Activated CD4-positive, alpha-beta memory T cell treated with anti-CD3 and anti-CD28 coated beads for 36 hours (primary cell): ENCODE measurements at regions of chr13 and their contacts with region 1.

Region 1: GRCh38 chr13:44259045-44260027 is 114.3 kb upstream of the SERP2 start:
- DNase-seq: peak; percentile 88
- H3K4me3 Mint-ChIP-seq: peak overlapping the region; percentile 45
- H3K27ac Mint-ChIP-seq: peak overlapping the region; percentile 72
- H3K4me1 Mint-ChIP-seq: peaks cover 20% of the 10 kb centered on the region
- H3K27me3 Mint-ChIP-seq: peaks cover 9% of the 10 kb centered on the region

Region 2: DNA sequence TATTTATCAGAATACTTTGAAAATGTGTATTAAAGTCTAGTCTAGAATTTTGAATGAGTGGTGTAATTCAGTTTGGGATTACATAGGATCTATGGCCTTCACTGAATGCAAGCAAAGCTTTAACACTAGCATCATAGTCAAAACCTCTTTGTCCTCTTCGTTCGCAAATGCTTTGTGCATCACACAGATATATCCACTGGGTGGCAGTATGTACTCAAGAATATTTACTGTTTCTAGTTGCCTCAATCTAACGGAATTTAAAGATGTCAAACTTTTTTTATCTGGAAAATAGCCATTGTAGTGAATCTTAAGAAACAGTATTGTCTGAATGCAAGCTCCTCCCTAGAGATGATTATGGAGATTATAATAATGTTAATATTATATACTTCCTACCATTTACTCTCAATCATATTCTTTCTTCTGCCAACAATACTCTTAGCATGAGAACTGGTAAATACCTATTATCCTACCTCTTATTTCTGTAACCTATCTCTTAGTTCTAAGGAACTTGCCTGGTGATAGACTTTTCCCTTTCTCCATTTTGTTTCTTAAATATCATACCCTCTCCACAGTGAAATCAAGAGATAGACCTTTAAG is 353.8 kb before region 1 on chr13:
- CTCF ChIA-PET with region 1: no interaction called
- POLR2A ChIA-PET with region 1: no interaction called
- intact Hi-C with region 1: loop called (anchors 10 kb)
- DNase-seq: peak; percentile 9
- H3K4me3 Mint-ChIP-seq: no peak overlapping the region
- H3K27ac Mint-ChIP-seq: no peak overlapping the region
- H3K4me1 Mint-ChIP-seq: peaks cover 3% of the 10 kb centered on the region
- H3K27me3 Mint-ChIP-seq: peaks cover 9% of the 10 kb centered on the region

Region 3: GRCh38 chr13:43977911-43978310 is 281.4 kb before region 1 on chr13:
- CTCF ChIA-PET with region 1: no interaction called
- POLR2A ChIA-PET with region 1: no interaction called
- intact Hi-C with region 1: no loop called
- DNase-seq: no peak
- H3K4me3 Mint-ChIP-seq: no peak overlapping the region
- H3K27ac Mint-ChIP-seq: no peak overlapping the region
- H3K4me1 Mint-ChIP-seq: no peaks in the 10 kb centered on the region
- H3K27me3 Mint-ChIP-seq: peaks cover 15% of the 10 kb centered on the region

Region 4: GRCh38 chr13:44181731-44182326 is 77.5 kb before region 1 on chr13:
- CTCF ChIA-PET with region 1: no interaction called
- POLR2A ChIA-PET with region 1: no interaction called
- intact Hi-C with region 1: no loop called
- DNase-seq: no peak
- H3K4me3 Mint-ChIP-seq: no peak overlapping the region
- H3K27ac Mint-ChIP-seq: no peak overlapping the region
- H3K4me1 Mint-ChIP-seq: no peaks in the 10 kb centered on the region
- H3K27me3 Mint-ChIP-seq: peaks cover 6% of the 10 kb centered on the region

Region 5: DNA sequence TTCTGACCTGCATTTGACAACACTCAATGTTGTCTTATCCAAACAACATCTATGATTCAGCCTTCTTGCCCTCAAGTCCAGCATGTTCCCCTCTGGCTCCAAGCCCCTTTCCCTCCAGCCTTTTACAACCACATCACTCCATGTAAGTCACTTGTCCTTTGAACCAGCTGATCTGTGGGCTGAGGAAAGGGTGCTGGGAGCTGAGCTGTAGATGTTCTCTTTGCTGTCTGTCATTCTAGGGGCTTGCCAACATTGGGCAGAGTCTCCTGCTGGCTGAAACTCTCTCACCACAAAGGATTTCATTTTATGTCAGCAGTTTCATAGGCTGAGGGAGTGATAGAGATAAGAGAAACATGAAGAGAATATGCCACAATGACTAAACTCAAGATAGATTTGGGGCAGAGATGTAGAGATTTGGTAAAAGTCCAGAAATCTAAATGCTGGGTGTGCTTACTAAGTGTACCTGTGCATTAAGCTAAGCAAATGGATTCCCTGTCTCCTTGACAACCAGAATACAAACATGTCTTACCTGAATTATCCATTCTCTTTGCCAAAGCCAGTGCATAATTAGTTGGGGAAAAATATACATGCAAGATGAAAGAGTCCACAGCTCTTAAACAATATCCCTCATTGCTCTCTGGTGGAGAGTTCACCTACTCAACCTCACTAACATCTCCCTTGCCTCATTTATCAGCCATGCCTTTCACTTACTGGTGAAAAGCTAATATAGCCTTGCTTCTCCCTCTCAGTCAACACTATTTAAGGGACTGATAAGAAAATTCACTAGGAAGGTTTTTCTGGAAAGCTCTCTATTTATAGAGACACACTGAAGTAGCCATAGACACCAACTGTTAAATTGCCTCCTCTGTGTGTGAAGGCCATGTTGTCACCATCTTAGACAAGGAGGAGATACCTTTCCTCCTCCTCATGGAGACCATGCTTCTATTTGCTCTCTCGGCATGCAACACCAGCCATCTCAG is 61.3 kb before region 1 on chr13:
- CTCF ChIA-PET with region 1: no interaction called
- POLR2A ChIA-PET with region 1: interaction called, 3 read pairs
- intact Hi-C with region 1: loop called (anchors 1 kb)
- DNase-seq: peak; percentile 60
- H3K4me3 Mint-ChIP-seq: no peak overlapping the region
- H3K27ac Mint-ChIP-seq: no peak overlapping the region
- H3K4me1 Mint-ChIP-seq: peaks cover 34% of the 10 kb centered on the region
- H3K27me3 Mint-ChIP-seq: peaks cover 16% of the 10 kb centered on the region

Region 6: DNA sequence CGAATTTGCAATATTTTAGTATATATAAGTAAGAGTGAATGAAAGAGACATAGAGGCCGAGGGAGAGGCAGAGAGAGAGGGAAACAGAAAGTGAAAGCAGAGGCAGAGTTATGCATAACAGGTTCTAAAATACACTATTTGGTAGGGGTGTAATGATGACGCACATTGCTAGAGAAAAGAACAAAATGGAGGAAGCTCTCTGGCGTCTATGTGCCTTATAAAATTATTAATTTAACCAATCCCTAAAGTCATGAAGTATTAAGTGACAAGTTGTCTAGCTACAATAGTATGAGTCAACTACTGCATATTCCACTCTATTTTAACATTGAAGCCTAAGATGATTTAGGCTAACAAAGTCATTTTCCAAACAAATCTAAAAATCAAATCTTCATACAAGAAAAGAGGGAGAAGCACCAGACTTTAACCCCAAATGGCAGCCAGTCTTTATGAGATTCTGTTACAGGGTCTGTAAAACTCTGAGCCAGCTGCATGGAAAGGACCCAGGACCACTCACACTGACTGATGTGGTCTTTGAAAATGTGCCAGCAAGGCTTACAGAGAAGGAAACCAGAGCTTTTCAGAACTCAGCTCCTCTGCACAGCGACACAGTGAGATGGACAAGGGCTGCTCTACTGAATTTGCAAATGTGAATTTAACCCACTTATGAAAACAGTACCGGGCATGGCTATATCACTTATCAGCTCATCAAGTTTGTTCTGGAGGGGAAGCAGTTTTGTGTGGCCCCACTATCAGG is 15.3 kb after region 1 on chr13:
- CTCF ChIA-PET with region 1: no interaction called
- POLR2A ChIA-PET with region 1: interaction called, 5 read pairs
- intact Hi-C with region 1: loop called (anchors 1 kb)
- DNase-seq: peak; percentile 19
- H3K4me3 Mint-ChIP-seq: peak overlapping the region; percentile 63
- H3K27ac Mint-ChIP-seq: peak overlapping the region; percentile 82
- H3K4me1 Mint-ChIP-seq: peaks cover 30% of the 10 kb centered on the region
- H3K27me3 Mint-ChIP-seq: peaks cover 3% of the 10 kb centered on the region

Region 7: GRCh38 chr13:44312898-44313551 is 53.7 kb after region 1 on chr13:
- CTCF ChIA-PET with region 1: no interaction called
- POLR2A ChIA-PET with region 1: no interaction called
- intact Hi-C with region 1: loop called (anchors 1 kb)
- DNase-seq: peak; percentile 35
- H3K4me3 Mint-ChIP-seq: no peak overlapping the region
- H3K27ac Mint-ChIP-seq: no peak overlapping the region
- H3K4me1 Mint-ChIP-seq: peaks cover 11% of the 10 kb centered on the region
- H3K27me3 Mint-ChIP-seq: peaks cover 38% of the 10 kb centered on the region